HepG2 (cell line): ENCODE measurements at regions of chr13 and their contacts with region 1.

Region 1: DNA sequence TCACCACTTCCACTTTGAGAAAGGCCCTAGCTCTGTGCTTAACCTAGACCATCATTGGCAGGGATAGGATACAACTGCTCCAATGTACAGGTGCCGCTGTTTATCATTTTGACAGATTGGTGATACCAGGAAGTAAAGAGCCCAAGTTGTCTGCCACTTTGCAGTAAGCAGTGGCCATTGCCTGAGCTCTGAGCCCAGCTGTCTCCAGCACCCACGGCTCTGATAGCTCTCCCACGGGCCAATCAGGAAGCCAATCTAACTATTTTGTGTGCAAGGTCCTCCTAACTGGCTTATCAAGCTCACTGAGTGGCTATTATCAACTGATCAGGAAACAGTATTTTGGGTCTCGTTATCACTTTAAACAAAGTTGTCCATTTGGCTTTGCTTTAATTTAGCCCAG is 181.1 kb downstream of the DCT start:
- DNase-seq: no peak
- ATAC-seq: no peak
- H3K4me3 ChIP-seq: no peak overlapping the region
- H3K27ac ChIP-seq: no peak overlapping the region
- H3K4me1 ChIP-seq: peaks cover 28% of the 10 kb centered on the region
- H3K27me3 ChIP-seq: no peaks in the 10 kb centered on the region
- CTCF ChIP-seq: no peak
- EP300 ChIP-seq: no peak
- POLR2A ChIP-seq: no peak
- RAD21 ChIP-seq: no peak

Region 2: DNA sequence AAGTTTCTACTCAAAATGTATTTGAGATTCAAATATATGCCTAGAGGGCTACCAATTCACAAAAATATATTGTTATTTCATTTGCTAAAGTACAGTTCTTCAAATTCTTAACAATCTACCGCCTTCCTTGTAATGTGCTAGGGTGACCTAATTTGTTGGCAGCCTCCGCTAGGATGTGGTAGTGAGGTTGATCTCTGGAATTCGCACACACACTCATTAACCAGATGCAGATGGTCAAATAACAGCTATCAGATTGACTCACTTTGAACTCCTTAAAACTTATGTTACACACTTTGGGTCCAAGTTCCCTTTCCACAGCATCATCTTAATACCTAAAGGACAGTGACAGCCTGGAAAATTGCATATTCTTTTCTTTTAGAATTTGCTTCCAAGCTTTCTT is 186.1 kb before region 1 on chr13:
- CTCF ChIA-PET with region 1: no interaction called
- POLR2A ChIA-PET with region 1: no interaction called
- in situ Hi-C with region 1: no loop called
- intact Hi-C with region 1: loop called (anchors 10 kb)
- DNase-seq: peak; percentile 28
- ATAC-seq: peak; percentile 71
- H3K4me3 ChIP-seq: no peak overlapping the region
- H3K27ac ChIP-seq: no peak overlapping the region
- H3K4me1 ChIP-seq: peaks cover 10% of the 10 kb centered on the region
- H3K27me3 ChIP-seq: no peaks in the 10 kb centered on the region
- CTCF ChIP-seq: no peak
- EP300 ChIP-seq: no peak
- POLR2A ChIP-seq: no peak
- RAD21 ChIP-seq: no peak